ENCODE measurements at regions of chr11 and their contacts with region 1.

Region 1: GRCh38 chr11:47863189-47863892 is 15.2 kb upstream of the NUP160 start:
- DNase-seq: peak in 3 of 14 experiments; percentile 46 to 84 (median 49)
- ATAC-seq: peak; percentile 71
- H3K4me3 ChIP-seq: no peak overlapping the region
- H3K4me3 Mint-ChIP-seq: peak overlapping the region; percentile 43
- H3K27ac ChIP-seq: no peak overlapping the region
- H3K27ac Mint-ChIP-seq: peak overlapping the region; percentile 36
- H3K4me1 ChIP-seq: peaks cover 33% of the 10 kb centered on the region
- H3K4me1 Mint-ChIP-seq: peaks cover 51% of the 10 kb centered on the region
- H3K27me3 ChIP-seq: no peaks in the 10 kb centered on the region
- H3K27me3 Mint-ChIP-seq: no peaks in the 10 kb centered on the region
- CTCF ChIP-seq: no peak

Region 2: GRCh38 chr11:47924184-47924691 is 60.9 kb after region 1 on chr11:
- CTCF ChIA-PET with region 1: no interaction called
- POLR2A ChIA-PET with region 1: no interaction called
- intact Hi-C with region 1: loop called in 1 of 2 experiments (anchors 5 kb)
- DNase-seq: no peak
- ATAC-seq: no peak
- H3K4me3 ChIP-seq: no peak overlapping the region
- H3K4me3 Mint-ChIP-seq: no peak overlapping the region
- H3K27ac ChIP-seq: no peak overlapping the region
- H3K27ac Mint-ChIP-seq: no peak overlapping the region
- H3K4me1 ChIP-seq: peaks cover 52% of the 10 kb centered on the region
- H3K4me1 Mint-ChIP-seq: peaks cover 38% of the 10 kb centered on the region
- H3K27me3 ChIP-seq: no peaks in the 10 kb centered on the region
- H3K27me3 Mint-ChIP-seq: no peaks in the 10 kb centered on the region
- CTCF ChIP-seq: no peak

Measured in CD4-positive, alpha-beta T cell (primary cell).